Right lobe of liver (tissue), 6 donors: ENCODE measurements at regions of chr11 and their contacts with region 1.

Region 1: GRCh38 chr11:57249384-57250319 is 12.6 kb upstream of the APLNR start:
- DNase-seq: peak; percentile 63 to 70 (median 65)
- ATAC-seq: peak; percentile 79 to 91 (median 83)
- H3K4me3 ChIP-seq: no peak overlapping the region
- H3K27ac ChIP-seq: no peak overlapping the region
- H3K4me1 ChIP-seq: no peaks in the 10 kb centered on the region
- H3K27me3 ChIP-seq: no peaks in the 10 kb centered on the region
- CTCF ChIP-seq: peak; percentile 72 to 89 (median 86)
- POLR2A ChIP-seq: no peak

Region 2: DNA sequence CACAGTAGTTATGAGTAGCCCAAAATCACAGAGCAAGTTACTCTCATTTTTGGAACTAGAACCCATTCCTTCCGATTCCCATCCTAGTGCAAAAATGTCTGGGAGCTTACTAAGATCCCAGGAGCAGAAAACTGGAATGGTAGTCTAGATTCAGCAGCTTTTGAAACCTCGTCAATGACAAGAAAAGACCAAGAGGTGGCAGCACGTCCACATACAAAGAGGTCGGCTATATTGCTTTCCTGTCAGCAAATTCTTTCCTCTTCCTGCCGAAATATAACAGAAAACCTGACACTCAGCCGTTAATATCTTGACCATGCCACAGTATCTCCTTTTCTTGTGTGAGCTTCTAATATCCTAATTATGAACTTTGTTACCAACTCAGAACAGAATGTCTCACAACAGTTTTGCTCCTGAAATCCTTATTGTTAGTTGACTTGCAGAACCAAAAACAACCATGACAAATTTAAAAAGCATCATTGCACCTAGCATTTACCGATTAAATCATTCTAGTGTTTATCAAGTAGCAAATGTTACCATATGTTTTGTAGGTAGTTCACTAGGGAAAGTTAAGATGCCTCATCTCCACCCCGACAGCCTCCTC is 408.3 kb before region 1 on chr11:
- intact Hi-C with region 1: loop called (anchors 10 kb)
- DNase-seq: peak in 1 of 3 donors; percentile 52
- ATAC-seq: peak; percentile 87 to 93 (median 88)
- H3K4me3 ChIP-seq: no peak overlapping the region
- H3K27ac ChIP-seq: no peak overlapping the region
- H3K4me1 ChIP-seq: no peaks in the 10 kb centered on the region
- H3K27me3 ChIP-seq: no peaks in the 10 kb centered on the region
- CTCF ChIP-seq: peak; percentile 66 to 79 (median 72)
- POLR2A ChIP-seq: no peak

Region 3: GRCh38 chr11:57124917-57125316 is 124.7 kb before region 1 on chr11:
- intact Hi-C with region 1: loop called (anchors 5 kb)
- DNase-seq: no peak
- ATAC-seq: peak in 3 of 4 donors; percentile 40 to 69 (median 49)
- H3K4me3 ChIP-seq: no peak overlapping the region
- H3K27ac ChIP-seq: no peak overlapping the region
- H3K4me1 ChIP-seq: no peaks in the 10 kb centered on the region
- H3K27me3 ChIP-seq: no peaks in the 10 kb centered on the region
- CTCF ChIP-seq: no peak
- POLR2A ChIP-seq: no peak

Region 4: DNA sequence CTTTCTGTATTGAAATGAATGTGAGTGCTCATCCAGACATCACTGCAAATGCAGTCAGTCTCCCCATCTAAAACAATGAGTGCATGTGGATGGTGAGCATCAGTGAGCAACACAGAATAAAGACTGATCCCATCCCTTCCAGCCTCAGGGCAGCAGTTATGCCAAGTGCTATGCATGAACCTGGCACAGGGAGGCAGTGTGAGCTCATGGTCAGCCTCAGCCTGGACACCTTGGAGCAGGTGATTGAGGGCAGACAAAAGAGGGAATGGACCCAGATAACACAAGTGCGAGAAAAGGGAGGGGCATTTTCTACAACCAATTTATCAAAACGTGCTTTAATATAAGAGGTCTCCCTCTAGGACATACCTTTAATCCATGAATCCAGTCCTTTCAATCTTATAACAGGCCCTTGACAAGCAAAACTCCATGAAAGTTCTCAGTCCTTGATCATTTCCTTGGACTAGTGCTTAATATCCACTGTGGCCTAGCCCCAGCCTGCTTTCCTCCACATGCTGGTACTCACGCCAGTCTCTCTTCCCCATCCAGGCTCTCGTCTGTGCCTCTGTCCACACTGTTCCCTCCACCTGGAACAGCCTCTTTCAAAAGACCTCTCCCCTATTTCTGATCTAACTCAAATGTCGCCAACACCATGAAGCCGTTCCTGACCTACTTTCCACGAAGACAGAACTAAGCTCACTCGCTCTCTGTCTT is 118.4 kb before region 1 on chr11:
- intact Hi-C with region 1: loop called (anchors 5 kb)
- DNase-seq: peak; percentile 58 to 73 (median 63)
- ATAC-seq: peak; percentile 96 to 100 (median 98)
- H3K4me3 ChIP-seq: no peak overlapping the region
- H3K27ac ChIP-seq: no peak overlapping the region
- H3K4me1 ChIP-seq: no peaks in the 10 kb centered on the region
- H3K27me3 ChIP-seq: no peaks in the 10 kb centered on the region
- CTCF ChIP-seq: peak; percentile 71 to 93 (median 83)
- POLR2A ChIP-seq: no peak

Region 5: DNA sequence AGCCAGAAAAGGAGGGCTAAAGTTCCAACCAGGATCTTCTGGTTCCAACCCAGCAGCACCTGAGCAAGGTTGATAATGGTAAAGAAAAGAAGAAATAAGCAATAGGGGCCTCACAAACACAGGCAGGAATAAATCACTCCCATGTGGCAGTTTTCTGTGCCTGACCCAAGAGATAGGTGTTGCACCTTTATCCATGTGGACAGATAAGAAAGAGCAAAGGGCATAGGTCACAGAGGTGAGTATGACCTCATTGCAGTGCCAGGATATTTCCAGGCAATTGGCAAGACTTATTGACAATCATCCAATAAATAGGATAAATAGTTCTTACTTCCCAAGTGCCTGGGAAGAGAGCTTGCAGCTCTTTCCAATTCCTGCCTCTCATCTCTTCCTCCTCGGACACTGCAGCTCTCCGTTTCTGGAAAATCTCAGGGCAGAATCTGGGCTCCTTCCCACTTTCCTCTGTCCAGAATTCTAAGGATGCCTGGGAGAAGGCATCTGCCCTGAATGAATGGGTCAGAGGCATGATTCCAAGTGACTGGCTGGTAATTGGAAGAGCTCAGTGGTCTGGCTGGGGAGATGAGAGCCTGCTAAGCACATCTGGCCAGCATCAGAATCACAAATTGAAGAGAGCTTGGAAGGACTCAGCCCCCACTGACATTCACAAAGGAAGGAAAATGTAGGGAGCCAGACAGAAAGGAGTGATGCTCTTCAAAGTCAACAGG is 82.4 kb before region 1 on chr11:
- intact Hi-C with region 1: loop called in 1 of 2 experiments (anchors 10 kb)
- DNase-seq: peak in 1 of 3 donors; percentile 57
- ATAC-seq: peak; percentile 88 to 95 (median 95)
- H3K4me3 ChIP-seq: no peak overlapping the region
- H3K27ac ChIP-seq: peak overlapping the region in 2 of 3 donors; percentile 17 to 31
- H3K4me1 ChIP-seq: peaks cover 0 to 11% (median 5%) of the 10 kb centered on the region in 4 donors
- H3K27me3 ChIP-seq: no peaks in the 10 kb centered on the region
- CTCF ChIP-seq: no peak
- POLR2A ChIP-seq: no peak

Region 6: GRCh38 chr11:57444362-57445121 is 194.9 kb after region 1 on chr11:
- intact Hi-C with region 1: no loop called
- DNase-seq: no peak
- ATAC-seq: no peak
- H3K4me3 ChIP-seq: no peak overlapping the region
- H3K27ac ChIP-seq: no peak overlapping the region
- H3K4me1 ChIP-seq: peaks cover 0 to 15% (median 5%) of the 10 kb centered on the region in 4 donors
- H3K27me3 ChIP-seq: no peaks in the 10 kb centered on the region
- CTCF ChIP-seq: no peak
- POLR2A ChIP-seq: no peak